ENCODE measurements at regions of chr7 and their contacts with region 1.

Region 1: DNA sequence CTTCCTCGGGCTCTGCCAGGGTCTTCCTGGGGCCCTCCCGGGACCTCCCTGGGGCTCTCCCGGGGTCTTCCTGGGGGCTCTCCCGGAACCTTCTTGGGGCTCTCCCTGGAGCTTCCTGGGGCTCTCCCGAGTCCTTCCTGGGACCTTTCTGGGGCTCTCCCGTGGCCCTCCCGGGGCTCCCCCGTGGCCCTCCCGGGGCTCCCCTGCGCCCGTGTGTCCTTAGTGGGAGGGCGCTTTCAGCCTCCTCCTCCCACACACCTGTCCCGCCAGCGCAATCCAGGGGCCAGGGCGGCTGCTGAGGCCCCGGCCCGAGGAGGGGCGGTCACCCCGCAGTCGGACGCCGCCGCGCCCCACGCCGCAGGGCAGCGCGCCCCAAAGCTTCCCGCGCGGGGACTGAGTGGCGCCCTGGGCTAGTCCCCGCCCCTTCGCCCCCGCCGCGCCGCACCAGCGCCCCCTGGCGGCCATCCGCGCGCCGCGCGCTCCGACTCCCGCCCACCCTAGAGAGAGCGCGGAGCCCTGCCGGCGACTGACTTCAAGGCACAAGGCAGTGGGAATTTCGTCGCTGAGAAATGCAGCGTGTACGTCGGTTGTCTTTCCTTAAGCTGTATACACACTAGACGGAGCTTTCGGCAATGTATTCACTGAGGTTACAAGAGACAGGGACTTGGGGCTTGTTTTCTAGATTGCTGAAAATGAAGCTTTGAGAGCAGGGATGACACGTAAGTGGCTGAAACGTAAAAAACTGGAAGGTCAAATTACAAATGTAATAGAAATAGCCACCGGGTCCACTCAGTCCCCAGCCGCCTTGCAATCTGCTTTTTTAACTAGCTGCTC is 47.1 kb downstream of the INSIG1 start:
- DNase-seq: peak; percentile 76 to 95 (median 83)
- ATAC-seq: peak; percentile 97
- H3K4me3 ChIP-seq: peak overlapping the region; percentile 28 to 33
- H3K4me3 Mint-ChIP-seq: peak overlapping the region; percentile 66
- H3K27ac ChIP-seq: no peak overlapping the region
- H3K27ac Mint-ChIP-seq: no peak overlapping the region
- H3K4me1 ChIP-seq: peaks cover 9% of the 10 kb centered on the region
- H3K4me1 Mint-ChIP-seq: peaks cover 4% of the 10 kb centered on the region
- H3K27me3 ChIP-seq: peaks cover 0 to 4% of the 10 kb centered on the region in 2 experiments
- H3K27me3 Mint-ChIP-seq: no peaks in the 10 kb centered on the region
- CTCF ChIP-seq: peak; percentile 71

Region 2: GRCh38 chr7:154913638-154914312 is 431.0 kb before region 1 on chr7:
- CTCF ChIA-PET with region 1: interaction called, 13 read pairs
- POLR2A ChIA-PET with region 1: interaction called, 3 read pairs
- intact Hi-C with region 1: loop called (anchors 1 to 5 kb)
- DNase-seq: peak; percentile 77 to 93 (median 86)
- ATAC-seq: peak; percentile 95
- H3K4me3 ChIP-seq: peak overlapping the region; percentile 34 to 37
- H3K4me3 Mint-ChIP-seq: peak overlapping the region; percentile 86
- H3K27ac ChIP-seq: no peak overlapping the region
- H3K27ac Mint-ChIP-seq: no peak overlapping the region
- H3K4me1 ChIP-seq: no peaks in the 10 kb centered on the region
- H3K4me1 Mint-ChIP-seq: peaks cover 3% of the 10 kb centered on the region
- H3K27me3 ChIP-seq: no peaks in the 10 kb centered on the region
- H3K27me3 Mint-ChIP-seq: peaks cover 29% of the 10 kb centered on the region
- CTCF ChIP-seq: peak; percentile 91

Region 3: GRCh38 chr7:155183655-155184054 is 161.2 kb before region 1 on chr7:
- CTCF ChIA-PET with region 1: interaction called, 83 read pairs
- POLR2A ChIA-PET with region 1: no interaction called
- intact Hi-C with region 1: no loop called
- DNase-seq: no peak
- ATAC-seq: no peak
- H3K4me3 ChIP-seq: no peak overlapping the region
- H3K4me3 Mint-ChIP-seq: no peak overlapping the region
- H3K27ac ChIP-seq: no peak overlapping the region
- H3K27ac Mint-ChIP-seq: no peak overlapping the region
- H3K4me1 ChIP-seq: no peaks in the 10 kb centered on the region
- H3K4me1 Mint-ChIP-seq: no peaks in the 10 kb centered on the region
- H3K27me3 ChIP-seq: no peaks in the 10 kb centered on the region
- H3K27me3 Mint-ChIP-seq: peaks cover 3% of the 10 kb centered on the region
- CTCF ChIP-seq: no peak

Region 4: GRCh38 chr7:155205368-155206317 is 139.2 kb before region 1 on chr7:
- CTCF ChIA-PET with region 1: interaction called, 13 read pairs
- POLR2A ChIA-PET with region 1: interaction called, 5 read pairs
- intact Hi-C with region 1: loop called in 1 of 2 experiments (anchors 1 kb)
- DNase-seq: peak; percentile 71 to 97 (median 81)
- ATAC-seq: peak; percentile 90
- H3K4me3 ChIP-seq: peak overlapping the region; percentile 59 to 65
- H3K4me3 Mint-ChIP-seq: peak overlapping the region; percentile 80
- H3K27ac ChIP-seq: peak overlapping the region; percentile 59 to 94
- H3K27ac Mint-ChIP-seq: peak overlapping the region; percentile 94
- H3K4me1 ChIP-seq: peaks cover 14% of the 10 kb centered on the region
- H3K4me1 Mint-ChIP-seq: peaks cover 22% of the 10 kb centered on the region
- H3K27me3 ChIP-seq: no peaks in the 10 kb centered on the region
- H3K27me3 Mint-ChIP-seq: no peaks in the 10 kb centered on the region
- CTCF ChIP-seq: no peak

Region 5: DNA sequence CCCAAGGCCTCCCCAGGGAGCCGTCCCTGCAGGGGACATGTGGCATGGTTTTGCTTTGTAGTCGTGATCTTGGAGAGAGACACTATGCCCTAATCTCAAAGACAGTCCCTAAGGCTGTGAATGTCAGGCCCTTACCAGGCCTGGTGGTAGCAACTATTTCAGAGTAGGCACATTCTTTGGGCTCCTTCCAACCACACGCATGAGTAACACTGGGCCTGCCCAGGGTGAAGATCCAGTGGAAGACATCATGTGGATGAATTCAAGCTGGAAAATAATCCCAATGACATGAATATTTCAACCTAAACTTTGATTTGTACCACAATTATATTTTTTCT is 86.6 kb before region 1 on chr7:
- CTCF ChIA-PET with region 1: interaction called, 13 read pairs
- POLR2A ChIA-PET with region 1: no interaction called
- intact Hi-C with region 1: no loop called
- DNase-seq: no peak
- ATAC-seq: no peak
- H3K4me3 ChIP-seq: no peak overlapping the region
- H3K4me3 Mint-ChIP-seq: no peak overlapping the region
- H3K27ac ChIP-seq: no peak overlapping the region
- H3K27ac Mint-ChIP-seq: no peak overlapping the region
- H3K4me1 ChIP-seq: no peaks in the 10 kb centered on the region
- H3K4me1 Mint-ChIP-seq: no peaks in the 10 kb centered on the region
- H3K27me3 ChIP-seq: no peaks in the 10 kb centered on the region
- H3K27me3 Mint-ChIP-seq: peaks cover 9% of the 10 kb centered on the region
- CTCF ChIP-seq: no peak

Region 6: GRCh38 chr7:155293721-155294510 is 50.9 kb before region 1 on chr7:
- CTCF ChIA-PET with region 1: interaction called, 16 read pairs
- POLR2A ChIA-PET with region 1: interaction called, 5 read pairs
- intact Hi-C with region 1: loop called (anchors 1 to 2 kb)
- DNase-seq: no peak
- ATAC-seq: no peak
- H3K4me3 ChIP-seq: no peak overlapping the region
- H3K4me3 Mint-ChIP-seq: no peak overlapping the region
- H3K27ac ChIP-seq: no peak overlapping the region
- H3K27ac Mint-ChIP-seq: no peak overlapping the region
- H3K4me1 ChIP-seq: peaks cover 13% of the 10 kb centered on the region
- H3K4me1 Mint-ChIP-seq: peaks cover 17% of the 10 kb centered on the region
- H3K27me3 ChIP-seq: no peaks in the 10 kb centered on the region
- H3K27me3 Mint-ChIP-seq: peaks cover 2% of the 10 kb centered on the region
- CTCF ChIP-seq: no peak

Region 7: DNA sequence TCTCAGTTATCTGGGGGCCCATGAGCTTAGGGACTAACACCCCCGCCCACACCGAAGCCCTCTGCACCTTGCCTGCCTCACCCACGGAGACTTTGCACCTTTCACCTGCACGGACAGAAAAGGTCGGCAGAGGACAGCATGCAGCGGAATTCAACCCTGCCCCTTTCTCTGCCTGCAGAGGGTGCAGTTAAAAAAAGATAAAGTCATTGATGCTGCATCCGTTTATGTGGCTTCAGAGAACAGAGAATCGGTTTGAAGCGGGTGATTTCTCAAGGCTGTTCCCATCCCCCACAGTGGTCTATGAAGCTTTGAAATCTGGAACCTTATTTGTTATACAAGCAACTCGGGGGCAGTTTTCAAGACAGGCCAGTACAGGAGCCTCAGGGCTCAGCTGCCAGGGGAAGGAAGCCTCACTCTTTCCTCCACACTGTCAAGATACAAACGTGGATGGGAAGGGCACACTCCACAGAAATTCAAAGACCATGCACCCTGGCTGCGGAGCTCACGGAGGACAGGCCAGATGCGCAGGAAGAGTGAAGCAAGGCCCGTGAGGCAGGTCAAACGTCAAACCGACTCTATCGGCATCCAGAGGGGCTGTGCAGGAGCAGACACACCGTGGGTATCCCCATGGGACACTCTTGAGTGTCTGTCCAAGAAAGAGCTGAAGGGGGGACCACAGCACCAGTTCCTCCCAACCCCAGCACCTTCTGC is 19.2 kb after region 1 on chr7:
- CTCF ChIA-PET with region 1: interaction called, 13 read pairs
- POLR2A ChIA-PET with region 1: no interaction called
- intact Hi-C with region 1: no loop called
- DNase-seq: no peak
- ATAC-seq: no peak
- H3K4me3 ChIP-seq: no peak overlapping the region
- H3K4me3 Mint-ChIP-seq: no peak overlapping the region
- H3K27ac ChIP-seq: no peak overlapping the region
- H3K27ac Mint-ChIP-seq: no peak overlapping the region
- H3K4me1 ChIP-seq: no peaks in the 10 kb centered on the region
- H3K4me1 Mint-ChIP-seq: peaks cover 2% of the 10 kb centered on the region
- H3K27me3 ChIP-seq: peaks cover 0 to 2% of the 10 kb centered on the region in 2 experiments
- H3K27me3 Mint-ChIP-seq: peaks cover 37% of the 10 kb centered on the region
- CTCF ChIP-seq: no peak

Measured in CD8-positive, alpha-beta T cell (primary cell).